AG04449 (cell line): ENCODE measurements at regions of chr3 and their contacts with region 1.

Region 1: DNA sequence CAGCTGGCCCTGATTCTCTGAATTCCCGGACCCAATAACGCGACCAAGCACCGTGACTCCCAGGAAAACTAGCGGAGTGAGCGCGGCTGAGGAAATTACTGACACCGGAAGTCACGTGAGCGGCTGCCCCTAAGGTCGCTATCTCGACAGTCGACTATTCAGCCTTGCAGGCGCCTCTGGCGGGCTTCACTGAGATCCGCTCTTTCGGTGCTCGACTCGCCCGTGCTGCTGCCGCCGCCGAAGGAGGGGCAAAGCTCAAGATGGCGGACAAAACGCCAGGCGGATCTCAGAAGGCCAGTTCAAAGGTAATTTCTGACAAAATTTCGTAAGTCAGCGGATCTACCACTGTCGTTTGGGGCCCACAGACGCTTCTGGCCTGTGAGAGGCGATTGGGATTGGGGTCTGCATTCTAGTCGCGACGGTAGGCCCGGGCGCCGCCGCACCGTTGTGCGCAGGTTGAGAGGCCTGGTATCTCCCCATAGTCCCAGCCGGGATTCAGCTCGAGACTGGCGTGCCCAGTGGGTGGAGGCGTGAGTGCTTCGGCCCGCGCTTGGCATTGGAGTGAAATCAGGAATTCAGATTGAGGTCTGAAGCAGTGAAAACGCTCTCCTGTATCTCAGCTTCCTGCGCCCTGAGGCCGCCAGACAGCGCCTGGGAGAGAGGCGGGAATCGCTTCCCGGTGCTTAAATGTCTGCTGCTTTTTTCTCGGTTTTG is at the start of gene U2SURP:
- DNase-seq: peak; percentile 93
- H3K4me3 ChIP-seq: peak within 1 kb of the TSS; percentile 91
- CTCF ChIP-seq: no peak

Region 2: GRCh38 chr3:142586803-142587406 is 414.6 kb before region 1 on chr3:
- CTCF ChIA-PET with region 1: interaction called, 75 read pairs
- POLR2A ChIA-PET with region 1: interaction called, 3 read pairs
- DNase-seq: no peak
- H3K4me3 ChIP-seq: no peak overlapping the region
- CTCF ChIP-seq: peak; percentile 50

Region 3: DNA sequence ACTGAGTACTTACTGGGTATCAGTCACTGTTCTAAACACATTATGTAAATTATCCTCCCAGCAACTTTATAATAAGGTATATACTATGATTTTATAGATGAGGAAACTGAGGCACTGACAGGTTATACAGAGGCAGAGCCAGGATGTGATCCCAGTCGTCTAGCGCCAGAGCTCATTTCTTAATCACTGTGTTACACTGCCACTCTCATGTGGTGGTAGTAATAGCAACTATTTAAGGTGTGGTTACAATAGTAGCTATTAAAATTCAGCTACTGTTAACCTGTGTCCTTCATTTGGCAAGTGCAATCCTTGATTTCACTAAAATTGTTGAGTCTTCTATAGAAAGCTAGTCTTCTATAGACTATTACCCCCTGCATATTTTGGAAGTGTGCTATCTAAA is 320.8 kb before region 1 on chr3:
- CTCF ChIA-PET with region 1: no interaction called
- POLR2A ChIA-PET with region 1: no interaction called
- DNase-seq: no peak
- H3K4me3 ChIP-seq: no peak overlapping the region
- CTCF ChIP-seq: no peak

Region 4: DNA sequence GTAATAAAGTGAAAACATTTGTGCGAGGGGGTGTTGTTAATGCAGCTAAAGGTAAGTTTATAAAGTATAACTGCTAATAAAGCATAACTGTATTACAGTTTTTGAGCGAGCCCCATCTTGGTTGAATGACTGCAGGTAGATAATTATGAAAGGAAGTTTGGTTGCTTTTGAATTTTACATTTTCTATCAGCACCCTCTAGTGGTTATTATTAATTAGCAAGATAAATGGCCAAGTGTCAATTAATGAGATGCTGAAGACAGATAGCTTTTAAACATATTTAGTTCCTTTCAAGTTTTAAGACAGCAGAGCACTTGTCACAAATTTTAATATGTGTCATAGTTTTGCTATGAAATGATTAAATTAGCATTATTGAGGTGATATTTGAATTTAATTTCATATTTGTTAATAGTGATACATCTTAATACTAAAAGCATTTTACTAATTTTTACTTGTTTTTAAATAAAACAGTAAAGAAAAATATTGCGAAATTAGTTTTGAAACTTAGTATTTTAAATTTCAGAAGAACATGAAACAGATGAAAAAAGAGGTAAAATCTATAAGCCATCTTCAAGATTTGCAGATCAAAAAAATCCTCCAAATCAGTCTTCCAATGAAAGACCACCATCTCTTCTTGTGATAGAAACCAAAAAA is 14.9 kb after region 1 on chr3:
- CTCF ChIA-PET with region 1: interaction called, 18 read pairs
- POLR2A ChIA-PET with region 1: interaction called, 4 read pairs
- DNase-seq: no peak
- H3K4me3 ChIP-seq: no peak overlapping the region
- CTCF ChIP-seq: peak; percentile 6

Region 5: DNA sequence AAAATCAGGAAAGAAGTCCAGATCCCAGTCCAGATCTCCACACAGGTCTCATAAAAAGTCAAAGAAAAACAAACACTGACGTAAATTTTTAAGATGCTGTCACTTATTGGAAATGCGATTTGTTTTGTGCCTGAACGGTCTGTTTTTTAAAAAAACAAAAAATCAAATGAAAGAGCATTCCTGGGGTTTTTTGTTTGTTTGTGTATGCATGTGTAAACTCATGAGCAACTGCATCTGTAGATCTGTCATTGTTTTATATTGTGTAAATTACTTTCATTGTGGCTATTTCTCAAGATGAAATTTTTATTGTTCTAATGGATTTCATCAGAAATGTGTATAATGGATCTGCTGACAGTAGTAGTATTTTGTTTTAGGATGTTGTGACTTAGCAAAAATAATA is 54.8 kb after region 1 on chr3:
- CTCF ChIA-PET with region 1: no interaction called
- POLR2A ChIA-PET with region 1: no interaction called
- DNase-seq: no peak
- H3K4me3 ChIP-seq: no peak overlapping the region
- CTCF ChIP-seq: no peak